Stomach (tissue), 19 donors: ENCODE measurements at regions of chr15 and their contacts with region 1.

Region 1: DNA sequence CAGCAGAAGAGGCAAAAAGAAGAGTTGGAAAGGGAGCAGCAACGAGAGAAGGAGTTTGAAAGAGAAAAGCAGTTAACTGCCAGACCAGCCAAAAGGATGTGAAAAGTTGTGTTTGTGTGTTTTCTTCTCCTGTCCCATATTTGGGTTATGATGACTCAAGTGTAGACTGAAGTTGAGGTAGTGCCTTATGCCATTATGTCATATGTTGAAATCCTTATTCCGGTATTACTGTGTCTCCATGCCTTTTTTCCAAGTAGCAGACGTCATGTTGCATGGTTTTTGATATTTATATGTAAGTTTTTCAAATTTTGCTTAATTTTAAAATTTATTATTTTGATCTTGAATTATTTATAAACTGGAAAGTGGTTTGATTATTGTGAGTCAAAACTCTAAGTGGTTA is 19.2 kb downstream of the BLOC1S6 start:
- DNase-seq: no peak
- H3K4me3 ChIP-seq: no peak overlapping the region
- H3K27ac ChIP-seq: no peak overlapping the region
- H3K4me1 ChIP-seq: peaks cover 0 to 12% (median 5%) of the 10 kb centered on the region in 4 donors
- H3K27me3 ChIP-seq: no peaks in the 10 kb centered on the region
- CTCF ChIP-seq: no peak
- EP300 ChIP-seq: no peak
- POLR2A ChIP-seq: no peak

Region 2: GRCh38 chr15:44812029-44812517 is 794.3 kb before region 1 on chr15:
- intact Hi-C with region 1: no loop called
- DNase-seq: peak; percentile 73 to 76
- H3K4me3 ChIP-seq: no peak overlapping the region
- H3K27ac ChIP-seq: peak overlapping the region; percentile 50 to 78 (median 69)
- H3K4me1 ChIP-seq: peaks cover 0 to 22% (median 14%) of the 10 kb centered on the region in 4 donors
- H3K27me3 ChIP-seq: no peaks in the 10 kb centered on the region
- CTCF ChIP-seq: no peak
- EP300 ChIP-seq: no peak
- POLR2A ChIP-seq: no peak

Region 3: GRCh38 chr15:45457641-45458433 is 148.6 kb before region 1 on chr15:
- intact Hi-C with region 1: loop called (anchors 5 kb)
- DNase-seq: peak; percentile 75 to 93
- H3K4me3 ChIP-seq: peak overlapping the region; percentile 43 to 49 (median 49)
- H3K27ac ChIP-seq: peak overlapping the region in 4 of 5 donors; percentile 76 to 88 (median 85)
- H3K4me1 ChIP-seq: peaks cover 13 to 54% (median 34%) of the 10 kb centered on the region in 4 donors
- H3K27me3 ChIP-seq: no peaks in the 10 kb centered on the region
- CTCF ChIP-seq: peak in 5 of 7 experiments; percentile 57 to 88 (median 75)
- EP300 ChIP-seq: no peak
- POLR2A ChIP-seq: no peak

Region 4: DNA sequence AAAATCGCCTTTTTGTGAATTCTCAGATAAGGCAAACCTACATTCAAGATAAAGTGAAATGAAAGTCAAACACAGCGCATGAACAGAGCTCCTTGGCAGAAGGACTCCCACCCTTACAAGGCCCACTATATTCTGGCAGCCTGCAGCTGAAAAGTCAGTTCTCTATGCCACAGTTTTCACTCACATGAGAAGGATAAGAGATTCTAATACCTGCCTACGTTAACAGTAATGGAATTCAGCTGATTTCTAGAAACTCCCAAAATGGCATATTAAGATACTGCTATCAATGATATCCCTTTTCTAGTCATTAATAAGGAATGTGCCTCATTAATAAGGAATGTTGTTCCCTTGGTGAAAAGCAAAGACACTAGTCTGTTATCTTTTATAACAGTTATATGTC is 110.8 kb before region 1 on chr15:
- intact Hi-C with region 1: no loop called
- DNase-seq: no peak
- H3K4me3 ChIP-seq: no peak overlapping the region
- H3K27ac ChIP-seq: no peak overlapping the region
- H3K4me1 ChIP-seq: no peaks in the 10 kb centered on the region
- H3K27me3 ChIP-seq: no peaks in the 10 kb centered on the region
- CTCF ChIP-seq: no peak
- EP300 ChIP-seq: no peak
- POLR2A ChIP-seq: no peak

Region 5: DNA sequence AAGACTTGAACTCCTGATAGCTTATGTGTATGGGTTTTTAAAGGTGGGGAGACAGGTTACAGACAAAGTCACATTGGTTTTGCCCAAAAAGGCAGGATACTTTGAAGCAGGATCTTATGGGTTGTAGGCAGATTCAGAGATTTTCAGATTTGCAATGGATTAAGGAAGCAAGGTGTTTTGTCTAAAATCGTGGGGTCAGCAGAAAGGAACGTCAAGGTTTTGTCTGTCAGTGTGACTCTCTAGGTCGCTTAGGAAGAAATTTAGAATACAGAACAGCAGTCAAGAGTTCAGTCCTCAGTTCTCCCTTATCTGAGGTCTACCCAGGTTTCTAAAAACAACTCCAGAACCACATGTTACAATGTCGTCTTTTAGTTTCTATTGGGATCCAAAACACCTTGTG is 389.4 kb after region 1 on chr15:
- intact Hi-C with region 1: no loop called
- DNase-seq: no peak
- H3K4me3 ChIP-seq: no peak overlapping the region
- H3K27ac ChIP-seq: no peak overlapping the region
- H3K4me1 ChIP-seq: no peaks in the 10 kb centered on the region
- H3K27me3 ChIP-seq: no peaks in the 10 kb centered on the region
- CTCF ChIP-seq: no peak
- EP300 ChIP-seq: no peak
- POLR2A ChIP-seq: no peak